Mammary epithelial cell (primary cell): ENCODE measurements at regions of chr16 and their contacts with region 1.

Region 1: DNA sequence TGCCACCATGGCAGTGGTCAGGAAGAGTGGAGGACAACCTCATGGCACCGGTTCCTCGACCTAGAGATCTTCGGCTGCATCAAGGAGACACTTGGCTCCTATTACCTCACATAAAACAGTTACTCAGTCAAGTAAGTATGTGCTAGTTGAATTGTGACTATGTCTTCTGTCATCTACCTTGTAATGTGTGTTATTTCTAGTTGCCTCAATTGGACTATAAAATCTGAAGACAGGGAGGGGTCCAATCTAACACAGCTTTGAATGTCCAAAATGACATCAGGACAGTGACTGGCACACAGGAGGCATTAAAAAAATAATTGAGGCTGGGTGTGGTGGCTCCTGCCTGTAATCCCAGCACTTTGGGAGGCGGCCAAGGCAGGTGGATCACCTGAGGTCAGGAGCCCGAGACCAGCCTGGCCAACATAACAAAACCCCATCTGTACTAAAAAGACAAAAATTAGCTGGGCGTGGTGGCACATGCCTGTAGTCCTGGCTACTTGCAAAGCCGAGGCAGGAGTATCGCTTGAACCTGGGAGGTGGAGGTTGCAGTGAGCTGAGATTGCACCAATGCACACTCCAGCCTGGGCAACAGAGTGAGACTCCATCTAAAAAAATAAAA is 17.3 kb downstream of the C16orf86 start:
- DNase-seq: no peak
- H3K4me3 ChIP-seq: no peak overlapping the region
- H3K27ac ChIP-seq: no peak overlapping the region
- H3K4me1 ChIP-seq: no peaks in the 10 kb centered on the region
- H3K27me3 ChIP-seq: no peaks in the 10 kb centered on the region
- CTCF ChIP-seq: no peak

Region 2: GRCh38 chr16:67593288-67593687 is 90.6 kb before region 1 on chr16:
- CTCF ChIA-PET with region 1: no interaction called
- dilution Hi-C with region 1: loop called (anchors 5 kb)
- in situ Hi-C with region 1: no loop called
- intact Hi-C with region 1: no loop called
- DNase-seq: no peak
- H3K4me3 ChIP-seq: no peak overlapping the region
- H3K27ac ChIP-seq: no peak overlapping the region
- H3K4me1 ChIP-seq: peaks cover 16% of the 10 kb centered on the region
- H3K27me3 ChIP-seq: no peaks in the 10 kb centered on the region
- CTCF ChIP-seq: no peak

Region 3: GRCh38 chr16:67632415-67633172 is 51.3 kb before region 1 on chr16:
- CTCF ChIA-PET with region 1: no interaction called
- dilution Hi-C with region 1: no loop called
- in situ Hi-C with region 1: no loop called
- intact Hi-C with region 1: no loop called
- DNase-seq: no peak
- H3K4me3 ChIP-seq: no peak overlapping the region
- H3K27ac ChIP-seq: no peak overlapping the region
- H3K4me1 ChIP-seq: no peaks in the 10 kb centered on the region
- H3K27me3 ChIP-seq: no peaks in the 10 kb centered on the region
- CTCF ChIP-seq: no peak

Region 4: DNA sequence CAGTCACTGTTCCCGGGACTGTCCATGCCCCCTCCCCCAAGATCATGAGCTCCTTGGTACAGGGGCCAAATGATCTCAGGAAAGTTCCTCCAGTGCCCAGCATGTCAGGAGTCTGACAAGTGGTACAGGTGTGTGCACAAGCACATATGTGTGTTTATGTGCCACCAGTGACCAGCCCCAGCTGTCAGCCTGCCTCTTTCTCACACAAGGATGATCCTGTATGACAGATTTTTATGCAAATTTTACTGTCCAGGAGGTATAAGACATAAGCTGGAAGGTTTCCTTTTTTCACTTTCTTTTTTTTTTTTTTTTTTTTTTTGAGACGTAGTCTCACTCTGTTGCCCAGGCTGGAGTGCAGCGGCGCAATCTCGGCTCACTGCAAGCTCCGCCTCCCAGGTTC is 66.6 kb after region 1 on chr16:
- CTCF ChIA-PET with region 1: no interaction called
- dilution Hi-C with region 1: loop called (anchors 5 kb)
- in situ Hi-C with region 1: no loop called
- intact Hi-C with region 1: no loop called
- DNase-seq: no peak
- H3K4me3 ChIP-seq: no peak overlapping the region
- H3K27ac ChIP-seq: no peak overlapping the region
- H3K4me1 ChIP-seq: peaks cover 8% of the 10 kb centered on the region
- H3K27me3 ChIP-seq: no peaks in the 10 kb centered on the region
- CTCF ChIP-seq: no peak

Region 5: GRCh38 chr16:67781565-67781921 is 97.7 kb after region 1 on chr16:
- CTCF ChIA-PET with region 1: no interaction called
- dilution Hi-C with region 1: no loop called
- in situ Hi-C with region 1: no loop called
- intact Hi-C with region 1: no loop called
- DNase-seq: peak; percentile 31
- H3K4me3 ChIP-seq: no peak overlapping the region
- H3K27ac ChIP-seq: no peak overlapping the region
- H3K4me1 ChIP-seq: peaks cover 24% of the 10 kb centered on the region
- H3K27me3 ChIP-seq: no peaks in the 10 kb centered on the region
- CTCF ChIP-seq: no peak